HCT116 (cell line): ENCODE measurements at regions of chr17 and their contacts with region 1.

Region 1: DNA sequence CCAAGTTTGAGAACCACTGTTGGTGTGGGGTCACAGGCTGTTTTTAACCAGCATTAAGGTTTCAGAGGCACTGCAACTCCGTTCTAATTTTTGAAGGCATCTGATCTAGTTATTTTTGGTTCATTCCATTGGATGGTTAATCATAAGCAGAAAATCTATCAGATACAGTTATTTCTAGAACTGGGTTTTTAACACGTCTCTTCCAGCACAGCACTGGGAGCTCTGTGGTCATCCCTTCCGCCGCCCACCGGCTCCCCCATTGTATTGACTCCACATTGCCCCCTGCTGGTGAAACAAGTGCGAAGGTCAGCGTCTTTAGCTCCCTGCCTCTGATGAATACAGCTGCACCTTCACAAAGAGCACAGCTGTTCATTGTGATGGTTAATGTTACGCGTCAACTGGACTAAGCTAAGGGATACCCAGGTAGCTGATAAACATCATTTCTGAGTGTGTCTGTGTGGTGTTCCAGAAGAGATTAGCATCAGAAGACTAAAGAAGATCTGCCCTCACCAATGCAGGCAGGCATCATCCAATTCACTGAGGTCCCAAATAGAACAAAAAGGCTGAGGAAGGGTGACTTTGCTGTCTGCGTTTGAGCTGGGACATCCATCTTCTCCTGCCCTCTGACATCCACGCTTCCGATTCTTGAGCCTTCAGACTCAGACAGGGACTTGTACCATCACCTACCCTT is 8.5 kb downstream of the CCL18 start:
- DNase-seq: peak; percentile 24
- ATAC-seq: peak; percentile 88
- H3K4me3 ChIP-seq: no peak overlapping the region
- H3K27ac ChIP-seq: no peak overlapping the region
- H3K4me1 ChIP-seq: no peaks in the 10 kb centered on the region
- H3K27me3 ChIP-seq: no peaks in the 10 kb centered on the region
- CTCF ChIP-seq: peak; percentile 25 to 91 (median 71); a peak in 4 of 6 replicates
- POLR2A ChIP-seq: no peak
- RAD21 ChIP-seq: peak; percentile 33; the same call in 1 of the 2 replicates

Region 2: DNA sequence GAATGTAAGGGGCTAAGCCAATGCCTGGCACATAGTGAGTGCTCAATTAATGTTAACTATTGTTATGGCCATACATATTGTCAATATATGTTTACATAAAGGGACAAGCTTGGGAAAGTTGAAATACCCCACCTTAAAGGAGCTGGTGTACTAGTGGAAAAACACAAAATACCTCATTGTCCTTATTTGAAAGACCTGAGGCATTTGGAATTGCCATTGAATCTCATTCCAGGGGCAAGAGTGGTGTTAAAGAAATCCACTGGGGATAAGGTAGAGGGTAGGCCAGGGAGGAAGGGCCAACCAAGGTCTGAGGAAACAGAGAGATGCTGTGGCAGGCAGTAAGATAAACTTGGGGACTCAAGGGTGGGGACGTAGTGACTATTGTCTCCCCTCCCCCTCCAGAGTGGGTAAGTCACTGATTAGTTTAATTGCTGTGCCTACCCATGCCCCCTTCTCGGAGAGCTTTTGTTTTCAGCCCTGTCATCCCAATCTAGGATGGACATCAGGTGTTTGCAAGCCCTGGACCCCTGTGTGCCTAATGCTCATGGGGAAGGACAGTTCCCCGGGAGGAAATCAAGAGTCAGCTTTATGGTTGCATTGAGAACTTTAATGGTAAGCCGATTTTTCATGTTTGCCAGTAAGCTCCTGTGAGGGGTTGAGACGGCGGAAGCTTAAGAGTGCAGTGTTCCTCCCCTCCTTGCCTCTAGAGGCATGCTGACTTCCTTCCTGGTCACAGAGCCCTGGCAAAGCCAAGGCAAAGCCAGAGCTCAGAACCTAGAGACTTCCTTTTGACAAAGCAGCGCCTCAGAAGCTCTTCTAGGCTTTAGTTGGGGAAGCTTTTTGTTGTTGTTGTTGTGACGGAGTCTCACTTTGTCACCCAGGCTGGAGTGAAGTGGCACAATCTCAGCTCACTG is 201.4 kb before region 1 on chr17:
- CTCF ChIA-PET with region 1: no interaction called
- POLR2A ChIA-PET with region 1: no interaction called
- RAD21 ChIA-PET with region 1: no interaction called
- intact Hi-C with region 1: no loop called
- DNase-seq: no peak
- ATAC-seq: peak; percentile 57; the same call in 1 of the 2 replicates
- H3K4me3 ChIP-seq: no peak overlapping the region
- H3K27ac ChIP-seq: no peak overlapping the region
- H3K4me1 ChIP-seq: peaks cover 0 to 2% of the 10 kb centered on the region in 2 experiments; a peak in 2 of 4 replicates
- H3K27me3 ChIP-seq: no peaks in the 10 kb centered on the region
- CTCF ChIP-seq: 0 out of 6 replicates have a peak, but pooled peaks of 1 of the 3 experiments have one; percentile 2
- POLR2A ChIP-seq: no peak
- RAD21 ChIP-seq: no peak

Region 3: GRCh38 chr17:36105781-36106492 is 33.4 kb after region 1 on chr17:
- CTCF ChIA-PET with region 1: no interaction called
- POLR2A ChIA-PET with region 1: no interaction called
- RAD21 ChIA-PET with region 1: no interaction called
- intact Hi-C with region 1: no loop called
- DNase-seq: no peak
- ATAC-seq: no peak
- H3K4me3 ChIP-seq: no peak overlapping the region
- H3K27ac ChIP-seq: no peak overlapping the region
- H3K4me1 ChIP-seq: no peaks in the 10 kb centered on the region
- H3K27me3 ChIP-seq: 0 out of 2 replicates have a peak, but pooled peaks cover 4% of the 10 kb centered on the region
- CTCF ChIP-seq: no peak
- POLR2A ChIP-seq: no peak
- RAD21 ChIP-seq: no peak

Region 4: DNA sequence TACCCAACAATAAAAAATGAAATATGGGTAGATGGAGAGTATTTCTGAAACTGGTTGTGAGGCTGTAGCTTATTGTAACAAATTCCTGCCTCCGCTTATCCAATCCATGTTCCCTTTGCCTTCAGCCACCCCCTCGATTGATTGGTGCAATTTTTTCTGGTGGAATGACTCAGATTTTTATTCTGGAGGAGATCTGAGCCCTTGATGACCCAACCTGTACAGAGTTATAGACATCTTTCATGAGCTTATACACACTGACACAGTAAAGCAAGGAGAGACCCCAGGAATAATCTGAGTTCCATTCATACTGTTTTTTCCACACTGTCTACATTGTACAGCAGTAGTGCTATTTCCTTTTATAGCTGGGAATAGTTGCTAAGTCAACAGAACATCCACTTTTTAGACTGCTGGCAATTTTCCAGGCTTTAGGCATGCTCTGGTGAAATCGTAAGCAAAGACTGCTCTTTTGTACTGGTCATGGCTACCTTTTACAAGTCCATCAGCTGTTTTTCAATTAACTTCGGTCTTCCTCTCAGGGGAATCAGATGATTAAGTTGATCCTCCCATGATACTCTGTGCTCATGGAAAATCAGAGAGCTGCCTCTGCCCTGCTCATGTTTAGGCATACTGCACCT is 61.1 kb after region 1 on chr17:
- CTCF ChIA-PET with region 1: no interaction called
- POLR2A ChIA-PET with region 1: no interaction called
- RAD21 ChIA-PET with region 1: no interaction called
- intact Hi-C with region 1: loop called (anchors 5 kb)
- DNase-seq: no peak
- ATAC-seq: no peak
- H3K4me3 ChIP-seq: no peak overlapping the region
- H3K27ac ChIP-seq: no peak overlapping the region
- H3K4me1 ChIP-seq: no peaks in the 10 kb centered on the region
- H3K27me3 ChIP-seq: 0 out of 2 replicates have a peak, but pooled peaks cover 7% of the 10 kb centered on the region
- CTCF ChIP-seq: no peak
- POLR2A ChIP-seq: no peak
- RAD21 ChIP-seq: no peak